ENCODE measurements at regions of chr1 and their contacts with region 1.

Region 1: GRCh38 chr1:40132383-40133311 is 28.5 kb upstream of the RLF start:
- DNase-seq: peak; percentile 1
- ATAC-seq: peak; percentile 67
- H3K4me3 ChIP-seq: peak overlapping the region; percentile 26
- H3K27ac ChIP-seq: no peak overlapping the region
- H3K4me1 ChIP-seq: no peaks in the 10 kb centered on the region
- H3K27me3 ChIP-seq: peaks cover 18% of the 10 kb centered on the region
- CTCF ChIP-seq: no peak
- POLR2A ChIP-seq: no peak
- RAD21 ChIP-seq: no peak

Region 2: GRCh38 chr1:40096977-40097782 is 35.5 kb before region 1 on chr1 and contains the start of gene PPT1:
- CTCF ChIA-PET with region 1: no interaction called
- POLR2A ChIA-PET with region 1: interaction called, 10 read pairs
- dilution Hi-C with region 1: no loop called
- in situ Hi-C with region 1: no loop called
- intact Hi-C with region 1: no loop called
- DNase-seq: peak; percentile 55
- ATAC-seq: peak; percentile 95
- H3K4me3 ChIP-seq: peak within 1 kb of the TSS; percentile 83
- H3K27ac ChIP-seq: peak within 1 kb of the TSS; percentile 69
- H3K4me1 ChIP-seq: peaks cover 2% of the 10 kb centered on the region; the same call in 1 of the 2 replicates
- H3K27me3 ChIP-seq: no peaks in the 10 kb centered on the region
- CTCF ChIP-seq: peak; percentile 21; the same call in 1 of the 2 replicates
- POLR2A ChIP-seq: peak; percentile 43; the same call in 1 of the 2 replicates
- RAD21 ChIP-seq: no peak
- total RNA-seq, gene PPT1: 41.4 and 55.4 TPM in 2 replicates